Cardiac septum (tissue), 1 donor: ENCODE measurements at regions of chrX and their contacts with region 1.

Region 1: GRCh38 chrX:19904778-19905367 is 17.5 kb upstream of the SH3KBP1 start:
- DNase-seq: no peak

Region 2: GRCh38 chrX:19990556-19991349 is 85.9 kb after region 1 on chrX and contains the start of gene BCLAF3:
- intact Hi-C with region 1: loop called (anchors 5 kb)
- DNase-seq: peak; percentile 94
- total RNA-seq, gene BCLAF3: 9.4 TPM

Region 3: GRCh38 chrX:20116579-20117240 is 211.8 kb after region 1 on chrX and contains the start of gene MAP7D2:
- intact Hi-C with region 1: loop called (anchors 10 kb)
- DNase-seq: no peak
- total RNA-seq, gene MAP7D2: 0.19 TPM

Region 4: GRCh38 chrX:20266810-20267606 is 362.1 kb after region 1 on chrX and contains the start of gene RPS6KA3:
- intact Hi-C with region 1: no loop called
- DNase-seq: peak; percentile 97
- total RNA-seq, gene RPS6KA3: 40.4 TPM